SK-N-SH (cell line): ENCODE measurements at regions of chr1 and their contacts with region 1.

Region 1: DNA sequence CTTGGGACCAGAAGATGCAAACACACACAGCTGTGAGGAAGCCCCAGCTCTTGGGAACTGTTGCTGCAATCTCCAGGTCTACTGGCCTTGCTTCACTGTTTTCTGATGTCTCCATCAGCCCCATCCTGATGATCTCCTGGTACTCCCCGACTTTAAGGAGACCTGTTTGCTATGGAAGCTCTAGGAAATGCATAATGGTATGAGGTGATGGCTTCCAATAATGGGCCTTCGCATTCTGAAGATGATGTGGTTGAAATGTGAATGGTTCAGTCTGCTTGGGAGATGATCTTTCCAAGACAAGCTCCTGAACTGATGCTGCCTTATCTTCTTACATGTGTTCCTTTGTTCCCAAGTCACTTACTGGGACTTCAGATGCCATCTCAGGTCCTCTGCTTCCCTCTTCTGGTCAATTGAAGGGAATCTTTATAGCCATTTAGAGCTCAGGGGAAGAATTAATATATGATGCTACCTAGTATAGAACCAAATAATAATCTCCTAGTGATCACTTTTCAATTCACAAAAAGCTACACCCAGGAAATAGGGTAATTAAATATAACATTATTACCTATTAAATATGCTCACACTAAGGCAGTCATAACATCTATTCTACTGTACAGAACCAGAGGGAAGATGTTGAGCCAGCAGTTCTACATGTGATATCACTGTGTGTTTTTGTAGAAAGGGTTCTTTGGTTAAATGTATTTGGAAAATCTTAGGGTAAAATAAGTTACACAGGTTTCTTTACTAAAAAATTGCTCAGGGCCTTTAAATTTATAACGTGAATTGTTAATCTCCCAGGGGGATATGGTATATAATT is 73.9 kb upstream of the VTCN1 start:
- DNase-seq: peak; percentile 62
- H3K4me3 ChIP-seq: no peak overlapping the region; a peak in 1 of 4 replicates
- H3K27ac ChIP-seq: no peak overlapping the region
- H3K4me1 ChIP-seq: no peaks in the 10 kb centered on the region
- H3K27me3 ChIP-seq: 0 out of 2 replicates have a peak, but pooled peaks cover under 1% of the 10 kb centered on the region
- CTCF ChIP-seq: peak; percentile 75
- EP300 ChIP-seq: no peak
- RAD21 ChIP-seq: peak; percentile 94

Region 2: GRCh38 chr1:117067533-117068370 is 216.9 kb before region 1 on chr1:
- CTCF ChIA-PET with region 1: interaction called, 128 read pairs
- POLR2A ChIA-PET with region 1: no interaction called
- DNase-seq: peak; percentile 70
- H3K4me3 ChIP-seq: no peak overlapping the region; a peak in 1 of 4 replicates
- H3K27ac ChIP-seq: no peak overlapping the region
- H3K4me1 ChIP-seq: no peaks in the 10 kb centered on the region
- H3K27me3 ChIP-seq: no peaks in the 10 kb centered on the region
- CTCF ChIP-seq: peak; percentile 89
- EP300 ChIP-seq: no peak
- RAD21 ChIP-seq: peak; percentile 97

Region 3: GRCh38 chr1:117121776-117122697 is 162.6 kb before region 1 on chr1:
- CTCF ChIA-PET with region 1: interaction called, 27 read pairs
- POLR2A ChIA-PET with region 1: no interaction called
- DNase-seq: peak; percentile 95
- H3K4me3 ChIP-seq: peak overlapping the region; percentile 66 to 80
- H3K27ac ChIP-seq: peak overlapping the region; percentile 88 to 92
- H3K4me1 ChIP-seq: peaks cover 4 to 10% of the 10 kb centered on the region in 2 experiments; a peak in 2 of 4 replicates
- H3K27me3 ChIP-seq: no peaks in the 10 kb centered on the region
- CTCF ChIP-seq: peak; percentile 87
- EP300 ChIP-seq: no peak
- RAD21 ChIP-seq: peak; percentile 62

Region 4: DNA sequence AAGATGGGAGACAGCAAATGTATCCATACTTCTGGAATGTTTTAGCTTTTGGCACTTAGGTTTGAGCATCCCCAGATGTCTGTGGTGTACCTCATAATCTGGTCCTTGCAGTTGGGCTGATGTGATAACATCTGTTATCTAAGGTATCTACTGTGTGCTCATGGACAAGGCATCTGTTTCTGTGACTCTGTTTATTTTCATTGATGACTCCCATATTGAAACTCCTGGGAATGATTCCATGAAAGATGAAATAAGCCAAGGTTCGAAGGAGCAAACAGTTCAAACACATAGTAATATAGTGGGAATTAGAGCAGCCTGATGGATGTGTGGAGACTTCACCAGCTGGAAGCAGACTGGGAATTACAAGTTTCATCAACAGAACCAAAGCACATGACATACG is 142.4 kb before region 1 on chr1:
- CTCF ChIA-PET with region 1: interaction called, 14 read pairs
- POLR2A ChIA-PET with region 1: no interaction called
- DNase-seq: peak; percentile 10
- H3K4me3 ChIP-seq: no peak overlapping the region
- H3K27ac ChIP-seq: peak overlapping the region in 1 of 2 experiments; percentile 92; a peak in 2 of 4 replicates
- H3K4me1 ChIP-seq: peaks cover 2 to 32% of the 10 kb centered on the region in 2 experiments; a peak in 3 of 4 replicates
- H3K27me3 ChIP-seq: no peaks in the 10 kb centered on the region
- CTCF ChIP-seq: no peak
- EP300 ChIP-seq: peak; percentile 78 to 96
- RAD21 ChIP-seq: no peak

Region 5: GRCh38 chr1:117295001-117295400 is 10.4 kb after region 1 on chr1:
- CTCF ChIA-PET with region 1: interaction called, 12 read pairs
- POLR2A ChIA-PET with region 1: no interaction called
- DNase-seq: no peak
- H3K4me3 ChIP-seq: no peak overlapping the region
- H3K27ac ChIP-seq: no peak overlapping the region
- H3K4me1 ChIP-seq: no peaks in the 10 kb centered on the region; a peak in 1 of 4 replicates
- H3K27me3 ChIP-seq: 0 out of 2 replicates have a peak, but pooled peaks cover 1% of the 10 kb centered on the region
- CTCF ChIP-seq: no peak
- EP300 ChIP-seq: no peak
- RAD21 ChIP-seq: no peak